ENCODE measurements at regions of chr11 and their contacts with region 1.

Region 1: GRCh38 chr11:86116386-86116726 is 47.5 kb upstream of the PICALM start:
- DNase-seq: peak; percentile 77
- ATAC-seq: peak; percentile 94
- H3K4me3 ChIP-seq: 0 out of 2 replicates have a peak overlapping the region, but pooled peaks have one; percentile 37
- H3K27ac ChIP-seq: peak overlapping the region; percentile 90
- H3K4me1 ChIP-seq: peaks cover 18% of the 10 kb centered on the region
- H3K27me3 ChIP-seq: no peaks in the 10 kb centered on the region
- CTCF ChIP-seq: no peak
- EP300 ChIP-seq: peak; percentile 79; a peak in 2 of 4 replicates
- POLR2A ChIP-seq: no peak
- RAD21 ChIP-seq: no peak

Region 2: DNA sequence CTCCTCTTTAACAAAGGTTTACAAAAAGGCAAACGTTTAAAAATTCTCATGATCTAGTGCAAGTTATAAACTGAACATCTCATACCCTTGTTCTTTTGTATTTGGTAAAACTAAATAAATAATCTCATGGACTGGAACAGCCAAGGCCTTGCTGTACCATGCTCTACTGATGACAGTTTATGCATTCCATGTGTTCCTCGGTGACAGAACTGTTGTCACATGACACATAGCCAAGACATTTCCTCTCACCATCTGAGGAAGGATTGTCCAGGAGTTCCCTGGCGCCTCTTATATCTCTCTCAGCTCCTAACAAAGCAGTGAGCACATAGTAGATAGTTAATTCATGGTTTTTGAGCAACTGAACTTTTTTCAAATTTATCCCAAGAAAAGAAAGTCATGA is 248.6 kb before region 1 on chr11:
- CTCF ChIA-PET with region 1: no interaction called
- POLR2A ChIA-PET with region 1: no interaction called
- RAD21 ChIA-PET with region 1: no interaction called
- SMC1A ChIA-PET with region 1: no interaction called
- in situ Hi-C with region 1: no loop called
- intact Hi-C with region 1: no loop called
- DNase-seq: no peak
- ATAC-seq: no peak
- H3K4me3 ChIP-seq: no peak overlapping the region
- H3K27ac ChIP-seq: no peak overlapping the region
- H3K4me1 ChIP-seq: no peaks in the 10 kb centered on the region
- H3K27me3 ChIP-seq: no peaks in the 10 kb centered on the region; a peak in 2 of 4 replicates
- CTCF ChIP-seq: no peak
- EP300 ChIP-seq: no peak
- POLR2A ChIP-seq: no peak
- RAD21 ChIP-seq: no peak

Region 3: DNA sequence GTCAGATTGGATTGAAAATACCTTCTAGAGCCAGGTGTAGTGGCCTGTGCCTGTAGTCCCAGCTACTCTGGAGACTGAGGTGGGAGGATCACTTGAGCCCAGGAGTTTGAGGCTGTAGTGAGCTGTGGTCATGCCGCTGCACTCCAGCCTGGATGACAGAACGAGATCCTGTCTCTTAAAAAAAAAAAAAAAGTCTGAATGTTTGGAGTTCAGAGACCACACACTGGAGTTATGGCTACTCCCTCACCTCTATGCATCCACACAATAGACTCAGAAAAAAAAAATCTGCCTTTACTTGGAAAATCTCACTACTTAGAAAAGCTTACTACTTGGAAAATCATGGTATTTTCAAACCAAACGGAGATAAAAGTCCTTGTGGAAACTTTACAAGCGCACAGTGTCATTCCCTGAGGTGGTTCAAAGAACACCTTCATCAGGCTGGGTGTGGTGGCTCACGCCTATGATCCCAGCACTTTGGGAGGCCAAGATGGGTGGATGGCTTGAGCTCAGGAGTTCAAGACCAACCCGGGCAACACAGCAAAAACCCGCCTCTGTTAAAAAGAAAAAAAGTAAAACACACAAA is 16.4 kb after region 1 on chr11:
- CTCF ChIA-PET with region 1: interaction called, 14 read pairs
- POLR2A ChIA-PET with region 1: interaction called, 3 read pairs
- RAD21 ChIA-PET with region 1: interaction called, 6 read pairs
- SMC1A ChIA-PET with region 1: interaction called, 20 read pairs
- in situ Hi-C with region 1: no loop called
- intact Hi-C with region 1: no loop called
- DNase-seq: no peak
- ATAC-seq: no peak
- H3K4me3 ChIP-seq: no peak overlapping the region
- H3K27ac ChIP-seq: no peak overlapping the region
- H3K4me1 ChIP-seq: no peaks in the 10 kb centered on the region
- H3K27me3 ChIP-seq: no peaks in the 10 kb centered on the region
- CTCF ChIP-seq: no peak
- EP300 ChIP-seq: no peak
- POLR2A ChIP-seq: no peak
- RAD21 ChIP-seq: no peak

Region 4: DNA sequence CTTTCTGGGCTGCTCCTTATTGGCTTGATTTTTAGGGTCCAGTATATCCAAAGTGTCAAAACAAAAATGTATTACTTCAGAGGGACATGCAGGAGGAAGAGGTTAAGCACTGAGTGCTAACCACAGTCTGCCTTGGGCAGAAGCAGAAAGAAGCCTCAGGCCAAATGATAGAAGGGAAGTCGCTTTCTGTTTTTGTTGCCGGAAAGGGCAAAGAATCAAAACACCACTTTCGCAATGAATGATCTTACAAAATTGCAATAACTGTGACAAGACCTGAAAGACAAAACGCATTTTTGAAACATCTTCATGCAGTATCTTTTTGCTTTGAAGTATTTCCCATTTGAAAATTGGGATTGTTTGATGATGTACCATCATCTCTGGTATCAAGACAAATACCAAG is 22.6 kb after region 1 on chr11:
- CTCF ChIA-PET with region 1: no interaction called
- POLR2A ChIA-PET with region 1: interaction called, 5 read pairs
- RAD21 ChIA-PET with region 1: interaction called, 7 read pairs
- SMC1A ChIA-PET with region 1: interaction called, 44 read pairs
- in situ Hi-C with region 1: no loop called
- intact Hi-C with region 1: no loop called
- DNase-seq: peak; percentile 84
- ATAC-seq: peak; percentile 92
- H3K4me3 ChIP-seq: peak overlapping the region; percentile 55; the same call in 1 of the 2 replicates
- H3K27ac ChIP-seq: peak overlapping the region; percentile 67
- H3K4me1 ChIP-seq: peaks cover 11% of the 10 kb centered on the region; the same call in 1 of the 2 replicates
- H3K27me3 ChIP-seq: no peaks in the 10 kb centered on the region
- CTCF ChIP-seq: no peak
- EP300 ChIP-seq: no peak; a peak in 1 of 4 replicates
- POLR2A ChIP-seq: no peak
- RAD21 ChIP-seq: no peak

Region 5: DNA sequence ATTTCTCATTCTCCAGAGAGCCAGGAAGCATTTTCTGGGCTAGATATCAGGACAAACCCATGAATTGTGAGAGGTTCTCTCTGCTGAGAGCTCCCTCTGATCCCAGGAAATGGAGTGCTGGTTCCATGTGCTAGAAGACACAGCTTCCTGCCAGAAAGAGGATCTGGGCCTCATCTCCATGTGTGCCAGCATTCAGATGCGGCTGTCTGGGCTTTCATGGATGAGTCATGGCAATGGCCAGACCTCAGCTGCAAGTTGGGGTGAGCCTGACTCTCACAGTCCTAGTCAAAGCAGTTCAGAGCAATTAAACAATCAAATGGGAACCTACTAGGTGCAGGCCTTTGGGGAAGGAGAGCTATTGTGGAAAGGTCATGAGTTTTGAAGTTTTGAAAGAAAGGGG is 45.9 kb after region 1 on chr11:
- CTCF ChIA-PET with region 1: no interaction called
- POLR2A ChIA-PET with region 1: interaction called, 3 read pairs
- RAD21 ChIA-PET with region 1: interaction called, 18 read pairs
- SMC1A ChIA-PET with region 1: interaction called, 20 read pairs
- in situ Hi-C with region 1: no loop called
- intact Hi-C with region 1: no loop called
- DNase-seq: no peak
- ATAC-seq: peak; percentile 29; the same call in 2 of the 3 replicates
- H3K4me3 ChIP-seq: no peak overlapping the region
- H3K27ac ChIP-seq: no peak overlapping the region
- H3K4me1 ChIP-seq: peaks cover 22% of the 10 kb centered on the region
- H3K27me3 ChIP-seq: no peaks in the 10 kb centered on the region
- CTCF ChIP-seq: no peak
- EP300 ChIP-seq: no peak
- POLR2A ChIP-seq: no peak
- RAD21 ChIP-seq: no peak

Region 6: DNA sequence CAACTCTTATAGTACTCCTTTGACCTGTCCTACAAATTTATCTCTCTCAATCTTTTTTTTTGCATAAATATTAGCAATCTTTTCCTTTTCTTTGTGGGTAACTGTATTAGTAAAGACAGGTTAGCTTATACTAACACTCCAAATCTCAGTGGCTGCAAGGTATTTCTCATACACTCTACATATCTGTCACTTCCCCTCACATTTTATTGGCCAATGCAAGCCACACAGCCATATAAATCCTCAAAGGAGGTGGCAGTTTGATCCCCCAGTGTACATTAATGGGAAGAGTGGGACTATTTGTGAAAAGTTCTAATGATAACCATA is 85.6 kb after region 1 on chr11:
- CTCF ChIA-PET with region 1: interaction called, 3 read pairs
- POLR2A ChIA-PET with region 1: interaction called, 4 read pairs
- RAD21 ChIA-PET with region 1: interaction called, 5 read pairs
- SMC1A ChIA-PET with region 1: interaction called, 11 read pairs
- in situ Hi-C with region 1: no loop called
- intact Hi-C with region 1: no loop called
- DNase-seq: no peak
- ATAC-seq: peak; percentile 85
- H3K4me3 ChIP-seq: peak overlapping the region; percentile 66
- H3K27ac ChIP-seq: peak overlapping the region; percentile 82
- H3K4me1 ChIP-seq: peaks cover 15% of the 10 kb centered on the region
- H3K27me3 ChIP-seq: no peaks in the 10 kb centered on the region
- CTCF ChIP-seq: no peak
- EP300 ChIP-seq: no peak
- POLR2A ChIP-seq: no peak
- RAD21 ChIP-seq: no peak